ENCODE measurements at regions of chr1 and their contacts with region 1.

Region 1: GRCh38 chr1:113207019-113207418 is 134.0 kb downstream of the LRIG2 start:
- DNase-seq: no peak
- ATAC-seq: no peak
- H3K4me3 ChIP-seq: no peak overlapping the region
- H3K27ac ChIP-seq: no peak overlapping the region
- H3K4me1 ChIP-seq: no peaks in the 10 kb centered on the region
- H3K27me3 ChIP-seq: peaks cover 0 to 24% (median 4%) of the 10 kb centered on the region in 9 donors
- CTCF ChIP-seq: no peak
- POLR2A ChIP-seq: no peak

Region 2: GRCh38 chr1:113185463-113186104 is 21.4 kb before region 1 on chr1:
- intact Hi-C with region 1: loop called in 1 of 10 experiments (anchors 2 kb)
- DNase-seq: no peak
- ATAC-seq: no peak
- H3K4me3 ChIP-seq: no peak overlapping the region
- H3K27ac ChIP-seq: no peak overlapping the region
- H3K4me1 ChIP-seq: no peaks in the 10 kb centered on the region
- H3K27me3 ChIP-seq: no peaks in the 10 kb centered on the region
- CTCF ChIP-seq: no peak
- POLR2A ChIP-seq: no peak